Mammary epithelial cell (primary cell): ENCODE measurements at regions of chr6 and their contacts with region 1.

Region 1: GRCh38 chr6:7561153-7561964 is 19.9 kb downstream of the DSP start:
- DNase-seq: peak; percentile 89
- H3K4me3 ChIP-seq: peak overlapping the region in 1 of 3 experiments; percentile 0
- H3K27ac ChIP-seq: peak overlapping the region; percentile 88
- H3K4me1 ChIP-seq: peaks cover 37% of the 10 kb centered on the region
- H3K27me3 ChIP-seq: no peaks in the 10 kb centered on the region
- CTCF ChIP-seq: no peak

Region 2: GRCh38 chr6:7300926-7301325 is 260.4 kb before region 1 on chr6:
- CTCF ChIA-PET with region 1: no interaction called
- dilution Hi-C with region 1: no loop called
- in situ Hi-C with region 1: no loop called
- intact Hi-C with region 1: loop called (anchors 5 kb)
- DNase-seq: no peak
- H3K4me3 ChIP-seq: no peak overlapping the region
- H3K27ac ChIP-seq: no peak overlapping the region
- H3K4me1 ChIP-seq: no peaks in the 10 kb centered on the region
- H3K27me3 ChIP-seq: no peaks in the 10 kb centered on the region
- CTCF ChIP-seq: no peak

Region 3: GRCh38 chr6:7505187-7505811 is 56.1 kb before region 1 on chr6:
- CTCF ChIA-PET with region 1: no interaction called
- dilution Hi-C with region 1: no loop called
- in situ Hi-C with region 1: no loop called
- intact Hi-C with region 1: no loop called
- DNase-seq: peak; percentile 100
- H3K4me3 ChIP-seq: peak overlapping the region in 2 of 3 experiments; percentile 14 to 24
- H3K27ac ChIP-seq: peak overlapping the region; percentile 100
- H3K4me1 ChIP-seq: peaks cover 23% of the 10 kb centered on the region
- H3K27me3 ChIP-seq: no peaks in the 10 kb centered on the region
- CTCF ChIP-seq: no peak